Aorta (tissue), 5 donors: ENCODE measurements at regions of chr2 and their contacts with region 1.

Region 1: DNA sequence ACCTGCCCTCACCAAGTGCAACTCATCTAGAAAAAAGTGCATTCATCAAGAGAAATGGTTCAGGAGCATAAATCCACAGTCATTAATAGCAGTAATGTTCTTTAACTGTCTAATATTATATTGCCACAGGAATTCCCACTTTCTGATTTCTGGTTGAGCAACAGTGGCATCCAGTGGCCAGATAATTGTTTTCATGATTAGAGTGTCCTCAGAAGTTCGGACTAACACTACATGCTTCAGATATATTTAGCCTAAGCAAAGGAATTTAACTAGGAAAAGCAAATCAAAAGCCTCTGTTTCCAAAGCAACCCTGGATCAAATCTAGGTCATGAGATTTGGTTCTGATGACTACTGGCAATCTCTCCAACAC is 9.8 kb upstream of the ERBB4 start:
- DNase-seq: no peak
- ATAC-seq: peak; percentile 68
- H3K4me3 ChIP-seq: no peak overlapping the region
- H3K27ac ChIP-seq: no peak overlapping the region
- H3K4me1 ChIP-seq: peaks cover 2 to 3% of the 10 kb centered on the region in 2 donors
- H3K27me3 ChIP-seq: no peaks in the 10 kb centered on the region

Region 2: DNA sequence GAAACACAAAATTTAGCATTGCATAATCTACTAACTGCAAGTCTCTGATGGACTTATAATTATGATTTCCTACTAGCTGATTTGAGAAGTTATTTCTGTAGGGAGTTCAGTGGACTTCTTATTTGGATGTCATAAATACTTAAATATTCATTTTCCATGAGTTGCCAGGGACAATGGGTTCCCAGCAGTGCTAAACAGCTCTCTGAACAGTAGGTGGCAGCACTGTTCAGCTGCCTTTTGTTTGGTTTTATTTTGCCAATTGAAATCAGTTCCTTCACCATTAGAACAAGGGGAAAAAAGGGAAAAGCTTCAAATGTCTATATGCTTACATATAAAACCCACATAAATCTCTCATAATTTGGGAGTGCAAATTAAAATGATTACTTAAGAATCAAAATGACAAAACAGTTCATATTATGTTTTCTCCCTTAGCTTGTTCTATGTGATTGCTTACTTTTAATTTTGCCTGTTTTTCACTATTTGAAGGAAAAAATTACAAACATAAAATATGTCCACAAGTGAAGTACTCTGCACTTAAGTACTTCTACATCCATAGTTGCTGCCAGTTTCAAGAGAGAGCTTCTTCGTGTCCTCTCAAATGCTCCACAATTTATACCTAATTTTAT is 1093.1 kb before region 1 on chr2:
- intact Hi-C with region 1: loop called in 1 of 2 experiments (anchors 10 kb)
- DNase-seq: peak in 1 of 2 donors; percentile 43
- ATAC-seq: no peak
- H3K4me3 ChIP-seq: no peak overlapping the region
- H3K27ac ChIP-seq: no peak overlapping the region
- H3K4me1 ChIP-seq: no peaks in the 10 kb centered on the region
- H3K27me3 ChIP-seq: no peaks in the 10 kb centered on the region

Region 3: DNA sequence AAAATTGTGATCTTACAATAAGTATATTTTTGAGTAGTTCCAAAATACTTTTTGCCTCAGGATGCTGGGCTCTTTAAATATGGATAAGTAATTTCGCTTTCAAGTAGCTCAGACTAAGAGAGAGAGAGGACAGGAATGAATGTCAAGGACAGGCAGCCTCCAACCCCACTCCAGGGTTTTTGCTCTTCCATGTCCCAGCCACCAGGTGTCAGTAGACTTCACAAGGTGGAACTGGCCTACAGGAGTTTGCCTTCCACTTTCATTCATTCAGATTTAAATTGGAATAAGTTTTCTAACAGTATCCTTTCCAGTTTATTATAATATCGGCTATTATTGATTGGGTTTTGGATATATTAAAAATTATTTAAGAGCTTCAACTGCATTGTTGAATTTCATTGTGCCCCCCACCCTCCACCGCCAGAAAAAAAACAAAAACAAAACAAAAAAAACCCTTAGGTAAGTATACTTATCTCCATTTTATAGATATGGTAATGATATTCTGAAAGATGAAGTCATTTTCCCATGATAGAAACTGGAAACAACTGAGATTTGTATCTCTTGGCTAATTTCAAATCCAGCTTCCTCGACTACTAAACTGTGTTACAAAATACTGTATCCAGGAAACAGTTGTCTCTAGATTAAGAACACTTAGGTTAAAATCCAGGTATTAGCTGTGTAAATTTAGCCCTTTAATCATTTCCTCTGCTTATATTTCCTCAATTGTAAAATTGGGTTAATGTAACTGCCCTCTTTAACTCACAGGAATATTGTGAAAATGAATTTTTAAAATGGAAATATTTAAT is 802.9 kb before region 1 on chr2:
- intact Hi-C with region 1: loop called (anchors 5 kb)
- DNase-seq: no peak
- ATAC-seq: peak; percentile 76
- H3K4me3 ChIP-seq: no peak overlapping the region
- H3K27ac ChIP-seq: no peak overlapping the region
- H3K4me1 ChIP-seq: no peaks in the 10 kb centered on the region
- H3K27me3 ChIP-seq: no peaks in the 10 kb centered on the region

Region 4: DNA sequence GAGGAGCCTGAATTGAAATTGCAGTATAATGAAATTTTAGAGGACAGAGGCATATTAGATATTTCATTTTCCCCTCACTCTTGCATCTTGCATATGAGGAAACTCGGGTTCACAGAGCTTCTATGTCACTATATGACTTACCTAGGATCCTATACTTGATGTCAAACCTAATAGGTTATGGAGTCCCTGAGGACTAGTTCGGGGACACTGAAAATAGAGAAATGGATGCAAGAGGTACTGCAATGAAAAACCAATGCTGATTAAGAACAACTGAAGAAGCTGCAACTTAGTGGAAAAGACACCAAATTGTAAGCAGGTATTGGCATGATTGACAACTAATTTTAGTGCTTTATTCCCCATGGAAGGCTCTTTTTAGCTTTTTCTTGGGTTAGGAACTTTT is 392.9 kb after region 1 on chr2:
- intact Hi-C with region 1: no loop called
- DNase-seq: no peak
- ATAC-seq: no peak
- H3K4me3 ChIP-seq: no peak overlapping the region
- H3K27ac ChIP-seq: no peak overlapping the region
- H3K4me1 ChIP-seq: peaks cover 0 to 4% of the 10 kb centered on the region in 2 donors
- H3K27me3 ChIP-seq: no peaks in the 10 kb centered on the region